ENCODE measurements at regions of chr12 and their contacts with region 1.

Region 1: GRCh38 chr12:122951979-122952892 is 14.0 kb downstream of the ABCB9 start:
- DNase-seq: no peak
- H3K4me3 ChIP-seq: no peak overlapping the region
- CTCF ChIP-seq: peak; percentile 96

Region 2: GRCh38 chr12:122651520-122652224 is 300.6 kb before region 1 on chr12:
- CTCF ChIA-PET with region 1: no interaction called
- POLR2A ChIA-PET with region 1: no interaction called
- DNase-seq: no peak
- H3K4me3 ChIP-seq: no peak overlapping the region
- CTCF ChIP-seq: no peak

Region 3: GRCh38 chr12:122799641-122800243 is 152.5 kb before region 1 on chr12:
- CTCF ChIA-PET with region 1: interaction called, 54 read pairs
- POLR2A ChIA-PET with region 1: no interaction called
- DNase-seq: no peak
- H3K4me3 ChIP-seq: no peak overlapping the region
- CTCF ChIP-seq: no peak

Region 4: GRCh38 chr12:122842505-122843405 is 109.5 kb before region 1 on chr12:
- CTCF ChIA-PET with region 1: no interaction called
- POLR2A ChIA-PET with region 1: no interaction called
- DNase-seq: no peak
- H3K4me3 ChIP-seq: no peak overlapping the region
- CTCF ChIP-seq: no peak

Region 5: GRCh38 chr12:122880668-122881067 is 71.6 kb before region 1 on chr12:
- CTCF ChIA-PET with region 1: interaction called, 34 read pairs
- POLR2A ChIA-PET with region 1: no interaction called
- DNase-seq: no peak
- H3K4me3 ChIP-seq: no peak overlapping the region
- CTCF ChIP-seq: peak; percentile 71

Region 6: GRCh38 chr12:122895705-122896636 is 56.3 kb before region 1 on chr12 and contains the start of gene VPS37B:
- CTCF ChIA-PET with region 1: interaction called, 10 read pairs
- POLR2A ChIA-PET with region 1: no interaction called
- DNase-seq: no peak
- H3K4me3 ChIP-seq: peak within 1 kb of the TSS; percentile 80
- CTCF ChIP-seq: no peak

Region 7: GRCh38 chr12:122965851-122966722 is 13.9 kb after region 1 on chr12 and contains the start of gene ABCB9:
- CTCF ChIA-PET with region 1: interaction called, 40 read pairs
- POLR2A ChIA-PET with region 1: interaction called, 4 read pairs
- DNase-seq: no peak
- H3K4me3 ChIP-seq: peak within 1 kb of the TSS; percentile 88
- CTCF ChIP-seq: peak; percentile 12

Region 8: DNA sequence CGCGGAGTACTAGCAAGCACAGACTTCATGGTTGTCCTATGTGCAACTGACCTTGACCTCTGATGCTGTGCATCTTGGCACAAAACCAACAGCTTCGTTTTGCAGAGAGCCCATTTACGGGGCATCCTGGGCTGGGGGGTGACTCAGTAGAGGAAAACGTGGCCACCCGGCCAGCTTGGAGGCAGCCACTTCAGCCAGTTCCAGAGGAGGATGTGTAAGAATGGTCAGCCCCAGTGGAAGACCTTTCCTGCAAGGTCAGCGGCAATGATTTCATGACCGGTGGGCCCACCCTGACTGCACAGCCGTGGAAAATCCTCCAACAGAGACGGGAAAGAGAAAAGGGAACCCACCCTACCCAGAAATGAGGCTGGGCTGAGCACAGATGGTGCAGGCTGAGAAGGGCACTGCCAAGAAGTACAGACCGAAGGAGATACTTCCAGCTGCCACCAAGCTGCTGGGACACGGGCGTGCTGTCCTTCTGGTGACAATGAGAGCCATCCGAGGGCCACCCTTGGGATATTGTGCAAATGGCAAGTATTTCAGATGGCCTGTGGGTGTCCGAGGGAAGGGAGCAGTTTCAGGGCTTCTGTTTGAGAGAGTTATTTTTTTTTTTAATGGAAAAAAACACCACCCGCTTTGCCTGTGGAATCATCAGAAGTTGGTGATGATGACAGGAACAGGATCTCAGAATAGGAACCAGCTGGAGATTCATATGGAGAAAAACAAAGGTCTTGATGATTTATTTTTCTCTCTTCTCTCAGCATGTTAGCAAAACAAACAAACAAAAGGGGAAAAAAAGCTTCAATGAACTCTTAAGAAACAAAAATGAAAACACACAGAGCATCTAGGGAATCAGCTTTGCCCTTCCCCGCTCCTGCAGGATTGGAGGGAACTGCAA is 1222.5 kb after region 1 on chr12:
- CTCF ChIA-PET with region 1: no interaction called
- POLR2A ChIA-PET with region 1: no interaction called
- DNase-seq: peak; percentile 40
- H3K4me3 ChIP-seq: peak overlapping the region; percentile 29
- CTCF ChIP-seq: no peak